ENCODE measurements at regions of chr5 and their contacts with region 1.

Region 1: GRCh38 chr5:10627160-10627701 is 63.4 kb downstream of the ANKRD33B start:
- DNase-seq: peak; percentile 43
- H3K4me3 ChIP-seq: peak overlapping the region in 3 of 4 donors; percentile 20 to 32 (median 31)
- H3K27ac ChIP-seq: peak overlapping the region; percentile 33 to 66 (median 58)
- H3K4me1 ChIP-seq: peaks cover 0 to 15% (median 12%) of the 10 kb centered on the region in 4 donors
- H3K27me3 ChIP-seq: peaks cover 0 to 7% (median 0%) of the 10 kb centered on the region in 3 donors
- CTCF ChIP-seq: no peak
- EP300 ChIP-seq: no peak
- POLR2A ChIP-seq: no peak

Region 2: DNA sequence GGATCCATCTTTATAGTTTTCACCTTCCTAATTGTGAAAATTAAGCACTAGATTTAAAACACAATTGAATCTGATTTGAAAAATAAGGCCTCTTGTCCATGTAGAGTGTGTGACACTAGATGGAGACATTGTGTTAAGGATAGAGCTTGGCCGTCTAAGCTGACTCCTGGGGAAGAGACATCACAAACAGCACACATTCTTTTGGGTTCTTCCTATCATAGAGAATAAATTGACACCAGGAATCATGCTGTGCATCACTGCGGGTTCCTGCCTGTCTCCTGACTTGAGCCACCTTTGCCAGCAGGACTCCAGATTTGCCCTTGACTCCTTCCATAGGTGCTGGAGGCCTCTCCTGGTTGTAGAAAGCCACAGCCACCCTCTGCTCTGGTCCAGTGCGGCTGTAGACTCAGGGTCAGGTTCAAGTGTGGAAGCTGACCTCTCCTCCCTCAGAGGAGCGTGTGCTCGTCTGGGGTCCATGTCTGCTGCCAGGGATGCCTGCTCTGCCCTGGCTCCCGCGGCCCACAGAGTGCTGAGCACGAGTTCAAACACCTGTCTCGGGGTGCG is 174.4 kb before region 1 on chr5:
- intact Hi-C with region 1: loop called (anchors 1 kb)
- DNase-seq: no peak
- H3K4me3 ChIP-seq: no peak overlapping the region
- H3K27ac ChIP-seq: no peak overlapping the region
- H3K4me1 ChIP-seq: peaks cover 0 to 3% (median 0%) of the 10 kb centered on the region in 4 donors
- H3K27me3 ChIP-seq: peaks cover 0 to 7% (median 0%) of the 10 kb centered on the region in 3 donors
- CTCF ChIP-seq: peak; percentile 16 to 61 (median 52)
- EP300 ChIP-seq: no peak
- POLR2A ChIP-seq: no peak

Region 3: GRCh38 chr5:10564838-10565784 is 62.1 kb before region 1 on chr5:
- intact Hi-C with region 1: loop called (anchors 5 kb)
- DNase-seq: no peak
- H3K4me3 ChIP-seq: peak overlapping the region; percentile 31 to 66 (median 54)
- H3K27ac ChIP-seq: peak overlapping the region; percentile 51 to 73 (median 62)
- H3K4me1 ChIP-seq: peaks cover 0 to 50% (median 40%) of the 10 kb centered on the region in 4 donors
- H3K27me3 ChIP-seq: peaks cover 38 to 56% (median 42%) of the 10 kb centered on the region in 3 donors
- CTCF ChIP-seq: no peak
- EP300 ChIP-seq: no peak
- POLR2A ChIP-seq: no peak

Region 4: GRCh38 chr5:10689391-10690081 is 62.3 kb after region 1 on chr5:
- intact Hi-C with region 1: no loop called
- DNase-seq: no peak
- H3K4me3 ChIP-seq: no peak overlapping the region
- H3K27ac ChIP-seq: no peak overlapping the region
- H3K4me1 ChIP-seq: peaks cover 0 to 7% (median 3%) of the 10 kb centered on the region in 4 donors
- H3K27me3 ChIP-seq: no peaks in the 10 kb centered on the region
- CTCF ChIP-seq: no peak
- EP300 ChIP-seq: no peak
- POLR2A ChIP-seq: no peak

Region 5: GRCh38 chr5:10712574-10713517 is 85.6 kb after region 1 on chr5:
- intact Hi-C with region 1: no loop called
- DNase-seq: no peak
- H3K4me3 ChIP-seq: no peak overlapping the region
- H3K27ac ChIP-seq: no peak overlapping the region
- H3K4me1 ChIP-seq: no peaks in the 10 kb centered on the region
- H3K27me3 ChIP-seq: no peaks in the 10 kb centered on the region
- CTCF ChIP-seq: no peak
- EP300 ChIP-seq: no peak
- POLR2A ChIP-seq: no peak